Activated B cell treated with CpG ODN at 0.5 μM for 24 hours (primary cell): ENCODE measurements at regions of chr14 and their contacts with region 1.

Region 1: DNA sequence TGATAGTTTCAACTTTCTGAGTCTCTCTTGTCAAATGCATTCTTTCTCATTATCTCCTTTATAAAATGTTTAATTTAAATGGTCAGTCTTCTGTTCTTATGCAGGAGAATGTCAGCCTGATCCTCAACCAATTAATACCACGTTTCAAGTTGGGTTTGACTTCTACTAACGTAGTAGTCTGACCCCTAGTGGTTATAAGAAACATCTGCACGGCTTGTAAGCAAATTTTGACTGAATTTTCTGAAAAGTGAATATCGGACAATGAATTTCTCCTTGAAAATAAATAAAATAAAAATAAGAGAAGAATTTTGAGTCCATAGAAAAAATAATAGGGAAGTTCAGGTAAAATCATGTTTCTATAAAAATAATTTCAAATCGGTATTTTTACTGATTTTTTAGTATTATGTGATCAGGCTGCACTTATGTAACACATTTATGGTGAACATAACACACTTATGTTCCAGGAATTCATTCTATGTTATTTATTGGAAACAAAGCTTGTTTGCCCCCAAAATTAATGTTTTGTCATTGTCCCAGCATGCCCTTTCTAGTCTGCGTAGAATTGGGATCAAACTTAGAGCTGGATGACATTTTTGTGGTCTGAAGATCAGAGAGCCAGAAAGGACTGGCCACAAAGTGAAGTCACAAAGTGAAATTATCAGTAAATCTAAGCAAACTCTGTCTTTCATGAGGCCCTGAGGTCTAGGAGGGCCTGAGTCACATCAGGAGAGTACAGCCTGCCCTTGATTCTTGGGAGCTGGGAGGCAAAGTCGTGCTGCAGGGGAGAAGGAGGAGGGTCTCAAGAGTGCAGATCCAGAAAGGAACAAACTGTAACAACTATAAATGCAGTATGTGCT is 101.2 kb upstream of the STXBP6 start:
- DNase-seq: no peak
- ATAC-seq: no peak
- H3K4me3 Mint-ChIP-seq: no peak overlapping the region
- H3K27ac Mint-ChIP-seq: no peak overlapping the region
- H3K4me1 Mint-ChIP-seq: no peaks in the 10 kb centered on the region
- H3K27me3 Mint-ChIP-seq: no peaks in the 10 kb centered on the region
- CTCF ChIP-seq: peak; percentile 53

Region 2: DNA sequence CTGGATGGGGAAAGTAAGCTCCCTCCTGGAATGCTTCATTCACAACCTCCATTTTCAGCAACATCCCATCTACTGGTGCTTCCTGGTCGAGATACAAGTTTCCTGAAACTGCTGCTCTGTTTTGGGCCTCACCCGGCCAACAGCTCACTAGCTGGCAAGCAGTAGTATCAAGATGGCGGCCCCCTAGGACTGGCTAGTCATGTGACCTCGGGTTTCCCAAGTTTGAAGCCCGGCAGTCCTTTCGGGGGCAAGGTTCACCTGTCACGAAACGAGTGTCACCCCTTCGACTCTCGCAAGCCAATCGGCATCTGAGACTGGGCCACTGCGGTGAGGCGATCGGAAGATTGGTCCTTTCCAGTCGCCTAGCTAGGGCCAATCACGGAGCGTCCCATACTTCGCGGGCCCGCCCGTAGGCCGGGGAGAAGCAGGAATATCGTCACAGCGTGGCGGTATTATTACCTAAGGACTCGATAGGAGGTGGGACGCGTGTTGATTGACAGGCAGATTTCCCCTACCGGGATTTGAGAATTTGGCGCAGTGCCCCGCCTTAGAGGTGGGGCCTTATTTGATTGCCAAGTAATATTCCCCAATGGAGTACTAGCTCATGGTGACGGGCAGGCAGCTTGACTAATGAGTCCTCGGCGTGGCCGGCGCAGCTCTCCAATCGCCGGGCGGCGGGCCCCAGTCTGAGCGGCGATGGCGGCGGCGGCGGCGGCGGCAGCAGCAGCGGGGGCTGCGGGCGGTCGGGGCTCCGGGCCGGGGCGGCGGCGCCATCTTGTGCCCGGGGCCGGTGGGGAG is 1830.2 kb before region 1 on chr14 and contains the start of gene PABPN1:
- CTCF ChIA-PET with region 1: no interaction called
- POLR2A ChIA-PET with region 1: no interaction called
- intact Hi-C with region 1: no loop called
- DNase-seq: peak; percentile 89
- ATAC-seq: peak; percentile 87
- H3K4me3 Mint-ChIP-seq: peak within 1 kb of the TSS; percentile 90
- H3K27ac Mint-ChIP-seq: peak within 1 kb of the TSS; percentile 98
- H3K4me1 Mint-ChIP-seq: peaks cover 26% of the 10 kb centered on the region
- H3K27me3 Mint-ChIP-seq: no peaks in the 10 kb centered on the region
- CTCF ChIP-seq: no peak
- total RNA-seq, gene PABPN1: 259 and 264 TPM in 2 replicates

Region 3: DNA sequence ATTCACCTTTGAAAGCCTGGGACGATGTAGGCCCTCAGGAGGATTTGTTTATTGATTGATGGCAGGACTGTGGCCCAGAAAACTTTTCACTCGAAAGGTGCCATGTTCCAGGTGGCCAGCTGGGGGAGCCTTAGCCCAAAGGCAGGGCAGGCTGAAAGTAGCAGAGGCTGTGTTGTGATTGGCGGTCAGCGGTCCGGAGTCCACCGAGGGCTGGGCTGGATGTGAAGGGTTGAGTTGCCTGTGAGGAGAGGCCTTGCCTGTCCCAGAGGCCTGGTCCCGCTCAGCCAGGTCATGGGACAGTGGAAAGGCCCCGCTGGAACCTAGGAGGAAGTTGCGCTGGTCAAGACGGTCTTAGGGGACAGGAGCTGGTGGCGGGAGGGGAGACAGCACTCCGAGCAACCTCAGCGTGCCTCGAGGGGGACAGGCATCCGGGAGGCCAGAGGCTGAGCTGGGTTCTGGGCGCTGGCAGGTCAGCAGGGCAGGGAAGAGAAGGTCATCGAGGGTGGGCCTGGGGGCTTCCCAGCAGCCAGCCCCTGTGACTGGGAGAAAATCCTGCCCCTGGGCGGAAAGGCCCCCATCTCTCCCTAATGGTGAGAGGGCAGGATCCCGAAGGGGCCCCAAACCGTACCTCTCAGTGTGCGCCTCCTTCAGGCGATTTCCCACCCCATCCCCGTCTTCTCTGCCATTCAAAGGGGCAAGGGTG is 669.4 kb before region 1 on chr14:
- CTCF ChIA-PET with region 1: no interaction called
- POLR2A ChIA-PET with region 1: no interaction called
- intact Hi-C with region 1: loop called (anchors 5 kb)
- DNase-seq: peak; percentile 27
- ATAC-seq: peak; percentile 77
- H3K4me3 Mint-ChIP-seq: peak overlapping the region; percentile 83
- H3K27ac Mint-ChIP-seq: peak overlapping the region; percentile 41
- H3K4me1 Mint-ChIP-seq: peaks cover 20% of the 10 kb centered on the region
- H3K27me3 Mint-ChIP-seq: no peaks in the 10 kb centered on the region
- CTCF ChIP-seq: no peak

Region 4: DNA sequence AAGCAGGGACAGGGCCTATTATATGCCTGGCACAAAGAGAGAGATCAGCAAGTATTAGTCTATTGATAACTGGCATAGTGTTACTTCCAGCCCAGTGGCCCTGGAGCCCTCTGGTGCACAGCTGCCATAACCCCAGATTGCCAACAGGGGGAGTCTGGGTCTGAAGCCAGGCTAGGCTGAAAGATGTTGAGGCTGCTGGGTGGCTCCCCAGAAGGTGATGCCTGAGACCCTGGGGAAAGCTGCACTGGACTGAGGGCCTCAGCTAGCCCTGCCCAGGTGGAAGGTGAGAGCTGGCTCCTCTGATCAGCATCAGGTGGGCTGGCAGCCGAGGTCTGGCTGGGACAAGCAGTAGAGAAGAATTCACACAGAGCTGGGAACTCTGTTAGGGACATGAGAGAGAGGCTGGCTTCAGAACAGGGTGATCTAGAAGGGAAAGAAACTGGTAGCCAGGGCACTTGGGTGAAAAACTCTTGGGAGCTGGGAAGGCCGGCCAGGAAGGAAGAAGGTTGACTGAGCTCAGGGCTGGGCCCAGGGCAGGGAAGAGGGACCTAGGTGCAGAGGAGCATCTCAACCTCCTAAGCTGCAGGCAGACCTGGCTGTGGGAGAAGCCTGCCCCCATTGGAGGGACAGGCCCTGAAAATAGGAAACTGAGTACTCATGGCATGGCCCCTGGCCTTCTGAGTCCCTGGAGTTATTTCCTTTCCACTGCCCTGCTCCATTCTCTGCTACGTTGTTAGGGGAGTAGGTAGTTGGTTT is 545.5 kb before region 1 on chr14:
- CTCF ChIA-PET with region 1: no interaction called
- POLR2A ChIA-PET with region 1: no interaction called
- intact Hi-C with region 1: loop called (anchors 1 kb)
- DNase-seq: peak; percentile 48
- ATAC-seq: peak; percentile 95
- H3K4me3 Mint-ChIP-seq: no peak overlapping the region
- H3K27ac Mint-ChIP-seq: no peak overlapping the region
- H3K4me1 Mint-ChIP-seq: peaks cover 34% of the 10 kb centered on the region
- H3K27me3 Mint-ChIP-seq: peaks cover 2% of the 10 kb centered on the region
- CTCF ChIP-seq: peak; percentile 94